Breast epithelium (tissue), 4 donors: ENCODE measurements at regions of chr5 and their contacts with region 1.

Region 1: DNA sequence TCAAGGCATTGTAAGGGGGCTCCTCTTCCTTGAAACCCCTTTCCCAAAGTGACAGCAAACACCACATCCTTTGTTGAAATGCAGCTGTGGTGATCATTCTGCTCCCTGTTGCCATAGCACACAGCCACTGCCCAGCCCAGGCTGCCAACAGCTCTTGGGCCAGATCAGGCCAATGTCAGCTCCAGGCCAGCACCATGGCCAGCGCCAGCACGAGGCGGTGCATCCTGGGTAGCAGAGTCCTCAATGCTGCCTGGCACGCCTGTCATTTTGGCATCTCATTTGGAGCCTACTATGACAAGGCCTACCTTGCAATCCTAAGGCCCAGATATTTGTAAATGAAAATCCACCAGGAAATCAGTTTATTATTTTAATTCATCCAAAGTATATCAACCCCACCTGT is 390.6 kb downstream of the DNAH5 start:
- DNase-seq: no peak
- H3K4me3 ChIP-seq: no peak overlapping the region
- H3K27ac ChIP-seq: no peak overlapping the region
- H3K4me1 ChIP-seq: no peaks in the 10 kb centered on the region
- H3K27me3 ChIP-seq: no peaks in the 10 kb centered on the region
- CTCF ChIP-seq: no peak
- POLR2A ChIP-seq: no peak

Region 2: DNA sequence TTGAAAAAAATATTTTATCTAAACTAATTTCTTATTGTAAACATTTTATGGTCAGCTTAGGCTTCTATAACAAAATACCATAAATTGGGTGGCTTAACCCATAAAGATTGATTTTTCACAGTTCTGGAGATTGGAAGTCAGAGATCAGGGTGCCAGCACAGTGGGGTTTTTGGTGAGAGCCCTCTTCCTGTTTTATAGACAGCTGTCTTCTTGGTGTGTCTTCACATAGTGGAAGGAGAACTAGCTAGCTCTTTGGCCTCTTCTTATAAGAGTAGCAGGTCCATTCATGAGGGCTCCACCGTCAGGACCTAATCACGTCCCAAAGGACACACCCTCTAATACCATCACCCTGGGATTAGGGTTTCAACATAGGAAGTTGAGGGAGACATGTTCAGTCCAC is 1054.3 kb after region 1 on chr5:
- intact Hi-C with region 1: loop called (anchors 5 kb)
- DNase-seq: no peak
- H3K4me3 ChIP-seq: no peak overlapping the region
- H3K27ac ChIP-seq: no peak overlapping the region
- H3K4me1 ChIP-seq: no peaks in the 10 kb centered on the region
- H3K27me3 ChIP-seq: no peaks in the 10 kb centered on the region
- CTCF ChIP-seq: no peak
- POLR2A ChIP-seq: no peak